MCF 10A (cell line): ENCODE measurements at regions of chr9 and their contacts with region 1.

Region 1: GRCh38 chr9:107421947-107422793 is 67.4 kb downstream of the KLF4 start:
- DNase-seq: peak; percentile 87
- H3K4me3 Mint-ChIP-seq: no peak overlapping the region
- H3K27ac Mint-ChIP-seq: no peak overlapping the region
- H3K4me1 Mint-ChIP-seq: peaks cover 11% of the 10 kb centered on the region
- H3K27me3 Mint-ChIP-seq: no peaks in the 10 kb centered on the region
- CTCF ChIP-seq: peak; percentile 56

Region 2: DNA sequence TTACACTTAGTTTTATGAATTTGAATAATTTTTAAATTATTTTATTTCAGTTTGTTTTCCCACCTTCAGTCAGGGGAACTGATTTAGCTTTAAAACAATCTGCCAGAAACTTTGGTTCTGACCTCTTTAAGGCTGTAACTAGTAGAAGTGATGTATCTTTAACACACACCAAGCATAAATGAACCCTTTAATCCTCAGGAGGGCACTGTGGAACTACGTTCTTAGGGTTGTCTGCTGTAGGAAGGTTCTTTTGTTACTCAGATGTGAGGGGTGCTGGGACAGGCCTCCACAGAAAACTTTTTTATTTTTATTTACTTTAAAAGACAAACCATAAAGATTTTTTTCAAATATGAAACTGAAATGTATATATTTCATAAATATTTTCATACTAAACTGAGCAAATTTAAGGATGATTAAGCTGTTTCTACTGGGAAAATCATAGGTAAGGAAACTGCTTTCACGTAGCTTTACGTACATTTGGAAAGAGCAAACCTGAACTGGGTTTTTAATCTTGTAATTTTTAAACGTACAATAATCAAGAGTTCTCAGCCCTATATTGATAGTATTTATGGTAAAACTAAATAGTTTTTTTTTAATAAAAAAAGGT is 62.0 kb after region 1 on chr9:
- CTCF ChIA-PET with region 1: interaction called, 15 read pairs
- POLR2A ChIA-PET with region 1: interaction called, 3 read pairs
- intact Hi-C with region 1: loop called (anchors 2 kb)
- DNase-seq: peak; percentile 81
- H3K4me3 Mint-ChIP-seq: no peak overlapping the region
- H3K27ac Mint-ChIP-seq: no peak overlapping the region
- H3K4me1 Mint-ChIP-seq: peaks cover 31% of the 10 kb centered on the region
- H3K27me3 Mint-ChIP-seq: no peaks in the 10 kb centered on the region
- CTCF ChIP-seq: peak; percentile 55

Region 3: DNA sequence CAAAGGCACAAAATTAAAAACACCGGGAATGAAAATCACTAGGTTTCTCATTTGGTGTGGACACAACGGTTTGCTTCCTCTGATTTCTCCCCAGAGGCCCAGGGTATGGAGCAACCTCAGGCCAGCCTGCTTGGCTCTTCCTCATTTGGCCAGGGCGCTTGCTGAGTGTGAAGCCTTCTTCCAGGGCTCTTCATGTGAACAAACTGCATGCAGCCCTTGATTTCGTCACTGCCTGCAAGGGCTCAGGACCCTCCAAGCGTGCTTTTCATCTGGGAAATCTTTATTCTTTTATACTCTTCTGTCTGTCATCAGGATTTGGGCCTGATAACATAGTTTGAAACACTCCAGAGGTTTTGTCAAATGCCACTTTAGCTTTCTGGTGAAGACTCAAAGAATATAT is 190.0 kb after region 1 on chr9:
- CTCF ChIA-PET with region 1: no interaction called
- POLR2A ChIA-PET with region 1: no interaction called
- intact Hi-C with region 1: no loop called
- DNase-seq: no peak
- H3K4me3 Mint-ChIP-seq: no peak overlapping the region
- H3K27ac Mint-ChIP-seq: no peak overlapping the region
- H3K4me1 Mint-ChIP-seq: no peaks in the 10 kb centered on the region
- H3K27me3 Mint-ChIP-seq: no peaks in the 10 kb centered on the region
- CTCF ChIP-seq: no peak